HAP-1 (cell line): ENCODE measurements at regions of chr12 and their contacts with region 1.

Region 1: GRCh38 chr12:116599285-116600136 is 40.3 kb downstream of the MAP1LC3B2 start:
- DNase-seq: peak; percentile 56 to 89
- H3K4me3 ChIP-seq: no peak overlapping the region
- H3K4me1 ChIP-seq: peaks cover 24% of the 10 kb centered on the region
- H3K27me3 ChIP-seq: no peaks in the 10 kb centered on the region

Region 2: GRCh38 chr12:115998119-115998633 is 601.3 kb before region 1 on chr12:
- in situ Hi-C with region 1: loop called (anchors 25 kb)
- DNase-seq: peak; percentile 18 to 62
- H3K4me3 ChIP-seq: no peak overlapping the region
- H3K4me1 ChIP-seq: no peaks in the 10 kb centered on the region
- H3K27me3 ChIP-seq: no peaks in the 10 kb centered on the region

Region 3: GRCh38 chr12:116673681-116674111 is 74.2 kb after region 1 on chr12:
- in situ Hi-C with region 1: no loop called
- DNase-seq: peak; percentile 10 to 42
- H3K4me3 ChIP-seq: no peak overlapping the region
- H3K4me1 ChIP-seq: no peaks in the 10 kb centered on the region
- H3K27me3 ChIP-seq: no peaks in the 10 kb centered on the region